Mucosa of descending colon (tissue), 3 donors: ENCODE measurements at regions of chr20 and their contacts with region 1.

Region 1: DNA sequence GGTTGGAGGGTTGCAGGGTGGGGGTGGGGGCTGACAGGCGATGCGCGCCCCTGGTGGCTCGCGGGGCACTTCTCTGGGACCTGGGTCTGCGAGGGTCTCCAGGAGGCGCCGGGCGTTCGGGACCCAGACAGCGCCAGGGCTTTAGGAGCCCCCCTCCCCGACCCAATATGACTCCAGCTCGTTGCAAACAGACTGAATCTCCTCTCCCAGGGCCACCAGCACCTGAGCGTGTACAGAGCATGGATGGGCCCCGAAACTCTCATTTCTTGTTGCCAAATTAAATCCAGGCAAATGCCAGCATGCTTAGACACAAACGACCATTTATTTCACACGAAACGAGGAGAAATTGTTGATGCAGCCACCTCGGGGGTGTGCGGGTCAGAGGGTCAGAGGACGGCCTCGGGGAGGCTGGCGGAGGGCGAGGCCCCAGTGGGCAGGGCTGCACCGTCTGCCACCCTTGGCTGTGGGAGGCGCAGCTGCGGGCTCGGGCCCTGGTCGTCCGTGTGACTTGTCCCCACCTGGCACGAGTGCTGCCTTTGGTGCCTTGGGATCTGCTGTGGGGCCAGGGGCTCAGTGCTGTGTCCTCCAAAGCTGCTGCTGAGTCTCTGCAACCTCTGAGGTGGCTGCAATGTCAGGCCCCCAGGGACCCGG is 20.9 kb upstream of the GATA5 start:
- DNase-seq: peak in 2 of 3 donors; percentile 42 to 43
- ATAC-seq: no peak
- H3K4me3 ChIP-seq: no peak overlapping the region
- H3K4me1 ChIP-seq: no peaks in the 10 kb centered on the region
- CTCF ChIP-seq: peak; percentile 39

Region 2: GRCh38 chr20:62616728-62617621 is 120.3 kb after region 1 on chr20:
- intact Hi-C with region 1: loop called in 1 of 2 experiments (anchors 5 kb)
- DNase-seq: peak; percentile 80 to 85 (median 84)
- ATAC-seq: peak; percentile 89
- H3K4me3 ChIP-seq: no peak overlapping the region
- H3K4me1 ChIP-seq: peaks cover 2% of the 10 kb centered on the region
- CTCF ChIP-seq: peak; percentile 94

Region 3: GRCh38 chr20:62891111-62891510 is 394.4 kb after region 1 on chr20:
- intact Hi-C with region 1: no loop called
- DNase-seq: no peak
- ATAC-seq: no peak
- H3K4me3 ChIP-seq: no peak overlapping the region
- H3K4me1 ChIP-seq: no peaks in the 10 kb centered on the region
- CTCF ChIP-seq: no peak